CD8-positive, alpha-beta T cell (primary cell): ENCODE measurements at regions of chr17 and their contacts with region 1.

Region 1: GRCh38 chr17:68035523-68036303 is at the start of gene KPNA2:
- DNase-seq: peak; percentile 80 to 96 (median 89)
- ATAC-seq: peak; percentile 84
- H3K4me3 ChIP-seq: peak within 1 kb of the TSS; percentile 97 to 99
- H3K4me3 Mint-ChIP-seq: peak within 1 kb of the TSS; percentile 90
- H3K27ac ChIP-seq: peak within 1 kb of the TSS; percentile 88 to 90
- H3K27ac Mint-ChIP-seq: peak within 1 kb of the TSS; percentile 95
- H3K4me1 ChIP-seq: peaks cover 8% of the 10 kb centered on the region
- H3K4me1 Mint-ChIP-seq: peaks cover 13% of the 10 kb centered on the region
- H3K27me3 ChIP-seq: no peaks in the 10 kb centered on the region
- H3K27me3 Mint-ChIP-seq: no peaks in the 10 kb centered on the region
- CTCF ChIP-seq: no peak
- total RNA-seq, gene KPNA2: 111 to 121 TPM

Region 2: DNA sequence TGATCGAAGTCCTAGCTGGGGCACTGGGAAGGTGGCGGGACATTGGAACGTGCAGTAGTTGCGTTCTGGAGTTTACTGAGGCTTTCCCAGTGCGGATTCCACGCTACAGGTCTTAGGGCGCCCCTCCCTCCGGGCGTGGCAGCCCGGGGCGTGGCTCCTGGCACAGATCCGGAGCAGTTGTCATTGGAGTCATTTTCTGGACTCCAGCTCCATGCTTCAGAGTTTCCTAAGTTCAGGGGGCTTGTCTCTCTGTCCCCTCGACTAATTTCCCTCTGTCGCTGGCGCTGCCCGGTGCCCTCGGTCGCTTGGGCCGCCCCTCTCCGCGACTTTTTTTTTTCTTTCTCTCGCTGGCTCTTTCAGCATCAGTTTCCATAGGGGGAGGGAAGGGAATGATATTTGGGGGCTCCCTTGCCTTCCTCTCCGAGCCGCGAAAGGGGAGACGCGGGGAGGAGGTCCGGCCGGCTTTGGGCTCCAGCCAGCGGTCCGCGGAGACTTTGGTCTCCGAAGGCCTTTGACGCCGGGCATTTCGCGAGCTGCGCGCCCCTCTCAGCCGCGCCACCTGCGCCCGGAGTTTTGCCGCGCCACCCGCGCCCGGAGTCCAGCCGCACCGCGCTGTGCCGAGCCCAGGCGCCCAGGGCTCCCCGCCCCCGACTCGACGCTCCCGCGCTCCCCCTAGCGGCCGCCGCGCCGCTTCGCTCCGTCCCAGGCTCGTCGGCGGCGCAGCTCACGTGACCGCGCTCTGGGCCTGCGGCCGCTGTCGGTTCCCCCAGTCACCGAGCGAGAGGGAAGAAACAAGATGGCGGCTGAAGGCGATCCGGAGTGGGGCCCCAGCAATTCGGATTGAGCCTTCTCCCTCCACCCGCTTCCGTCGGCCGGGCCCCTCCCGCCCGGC is 210.7 kb before region 1 on chr17 and contains the start of gene BPTF:
- CTCF ChIA-PET with region 1: no interaction called
- POLR2A ChIA-PET with region 1: no interaction called
- intact Hi-C with region 1: loop called in 1 of 2 experiments (anchors 1 kb)
- DNase-seq: peak; percentile 82 to 97 (median 92)
- ATAC-seq: peak; percentile 69
- H3K4me3 ChIP-seq: peak within 1 kb of the TSS; percentile 75 to 85
- H3K4me3 Mint-ChIP-seq: peak within 1 kb of the TSS; percentile 99
- H3K27ac ChIP-seq: peak within 1 kb of the TSS; percentile 68 to 80
- H3K27ac Mint-ChIP-seq: peak within 1 kb of the TSS; percentile 100
- H3K4me1 ChIP-seq: peaks cover 33% of the 10 kb centered on the region
- H3K4me1 Mint-ChIP-seq: peaks cover 31% of the 10 kb centered on the region
- H3K27me3 ChIP-seq: no peaks in the 10 kb centered on the region
- H3K27me3 Mint-ChIP-seq: peaks cover 4% of the 10 kb centered on the region
- CTCF ChIP-seq: peak; percentile 94
- total RNA-seq, gene BPTF: 97.8 to 107 TPM

Region 3: DNA sequence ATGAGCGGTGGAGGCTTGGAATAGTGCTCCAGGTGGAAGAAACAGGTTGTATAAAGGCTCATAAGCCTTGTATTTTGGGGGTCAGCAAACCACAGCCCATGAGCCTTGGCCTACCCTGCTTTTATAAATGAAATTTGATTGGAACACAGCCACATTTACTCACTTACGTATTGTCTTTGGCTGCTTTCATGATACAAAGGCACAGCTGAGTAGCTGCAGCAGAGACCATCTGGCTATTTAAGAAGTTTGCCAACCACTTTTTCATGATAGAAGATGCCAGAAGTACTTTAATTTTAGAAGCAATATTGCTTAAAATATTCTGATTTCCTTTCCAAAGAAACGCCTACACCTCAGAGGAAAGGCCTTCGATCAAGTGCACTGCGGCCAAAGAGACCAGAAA is 113.2 kb before region 1 on chr17:
- CTCF ChIA-PET with region 1: no interaction called
- POLR2A ChIA-PET with region 1: no interaction called
- intact Hi-C with region 1: no loop called
- DNase-seq: no peak
- ATAC-seq: no peak
- H3K4me3 ChIP-seq: no peak overlapping the region
- H3K4me3 Mint-ChIP-seq: no peak overlapping the region
- H3K27ac ChIP-seq: no peak overlapping the region
- H3K27ac Mint-ChIP-seq: peak overlapping the region; percentile 79
- H3K4me1 ChIP-seq: no peaks in the 10 kb centered on the region
- H3K4me1 Mint-ChIP-seq: no peaks in the 10 kb centered on the region
- H3K27me3 ChIP-seq: no peaks in the 10 kb centered on the region
- H3K27me3 Mint-ChIP-seq: no peaks in the 10 kb centered on the region
- CTCF ChIP-seq: no peak

Region 4: DNA sequence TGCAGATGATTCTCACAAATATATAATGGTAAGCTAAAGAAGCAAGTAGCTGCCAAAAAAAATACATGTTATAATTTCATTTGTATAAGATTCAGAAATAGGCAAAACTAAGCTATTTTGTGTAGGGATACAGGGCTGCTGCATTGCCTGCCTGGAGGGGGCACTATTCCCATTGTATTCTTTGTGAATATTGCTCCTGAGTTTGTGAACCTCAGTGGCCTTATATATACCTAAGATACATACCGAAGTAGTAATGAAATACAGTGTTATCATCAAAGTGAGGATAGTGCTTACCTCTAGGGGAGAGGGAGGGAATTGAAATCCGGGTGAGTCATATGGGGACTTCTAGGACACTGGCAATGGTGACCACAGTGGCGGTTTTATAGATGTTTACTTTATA is 92.9 kb before region 1 on chr17:
- CTCF ChIA-PET with region 1: no interaction called
- POLR2A ChIA-PET with region 1: no interaction called
- intact Hi-C with region 1: no loop called
- DNase-seq: peak in 1 of 9 experiments; percentile 26
- ATAC-seq: no peak
- H3K4me3 ChIP-seq: no peak overlapping the region
- H3K4me3 Mint-ChIP-seq: no peak overlapping the region
- H3K27ac ChIP-seq: no peak overlapping the region
- H3K27ac Mint-ChIP-seq: no peak overlapping the region
- H3K4me1 ChIP-seq: no peaks in the 10 kb centered on the region
- H3K4me1 Mint-ChIP-seq: no peaks in the 10 kb centered on the region
- H3K27me3 ChIP-seq: no peaks in the 10 kb centered on the region
- H3K27me3 Mint-ChIP-seq: no peaks in the 10 kb centered on the region
- CTCF ChIP-seq: peak; percentile 39

Region 5: DNA sequence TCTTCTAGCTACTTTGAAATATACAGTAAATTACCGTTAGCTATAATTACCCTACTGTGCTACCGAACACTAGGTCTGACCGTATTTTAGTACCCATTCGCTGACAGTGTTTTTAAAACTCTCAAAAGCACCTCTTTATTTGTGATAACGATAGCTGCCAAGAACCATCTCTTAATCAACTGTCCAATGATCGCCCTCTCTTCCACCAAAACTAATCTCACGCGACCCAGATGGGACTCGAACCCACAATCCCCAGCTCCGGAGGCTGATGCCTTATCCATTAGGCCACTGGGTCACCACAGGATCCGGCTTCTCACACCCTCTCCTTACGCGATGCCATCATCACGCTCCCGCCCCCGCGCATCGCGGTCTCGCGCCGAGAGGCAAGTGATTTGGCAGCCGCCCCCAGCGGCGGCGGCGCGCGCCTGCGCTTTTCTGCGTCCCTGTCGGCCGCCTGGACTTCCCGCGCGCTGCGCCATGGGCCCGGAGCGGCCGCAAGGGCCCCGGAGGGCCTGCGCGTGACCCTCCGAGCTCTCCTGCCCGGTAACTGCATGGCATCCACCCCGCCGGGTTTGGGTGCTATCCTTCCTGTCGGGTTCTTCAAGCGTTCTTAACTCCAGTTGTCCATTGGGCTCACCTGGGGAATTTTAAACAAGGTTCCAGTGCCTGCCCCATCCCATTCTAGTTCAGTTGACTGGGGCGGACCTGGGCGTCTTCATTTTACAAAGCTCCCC is 15.9 kb before region 1 on chr17:
- CTCF ChIA-PET with region 1: interaction called, 4 read pairs
- POLR2A ChIA-PET with region 1: interaction called, 5 read pairs
- intact Hi-C with region 1: loop called (anchors 1 kb)
- DNase-seq: peak; percentile 93 to 99 (median 96)
- ATAC-seq: peak; percentile 92
- H3K4me3 ChIP-seq: peak overlapping the region; percentile 64 to 71
- H3K4me3 Mint-ChIP-seq: peak overlapping the region; percentile 84
- H3K27ac ChIP-seq: peak overlapping the region; percentile 58 to 64
- H3K27ac Mint-ChIP-seq: peak overlapping the region; percentile 93
- H3K4me1 ChIP-seq: peaks cover 6% of the 10 kb centered on the region
- H3K4me1 Mint-ChIP-seq: peaks cover 23% of the 10 kb centered on the region
- H3K27me3 ChIP-seq: no peaks in the 10 kb centered on the region
- H3K27me3 Mint-ChIP-seq: no peaks in the 10 kb centered on the region
- CTCF ChIP-seq: peak; percentile 33

Region 6: GRCh38 chr17:68184816-68185436 is 149.2 kb after region 1 on chr17:
- CTCF ChIA-PET with region 1: no interaction called
- POLR2A ChIA-PET with region 1: no interaction called
- intact Hi-C with region 1: loop called in 1 of 2 experiments (anchors 10 kb)
- DNase-seq: peak in 7 of 9 experiments; percentile 46 to 89 (median 64)
- ATAC-seq: peak; percentile 70
- H3K4me3 ChIP-seq: peak overlapping the region; percentile 11 to 74
- H3K4me3 Mint-ChIP-seq: peak overlapping the region; percentile 68
- H3K27ac ChIP-seq: peak overlapping the region; percentile 5 to 92
- H3K27ac Mint-ChIP-seq: peak overlapping the region; percentile 86
- H3K4me1 ChIP-seq: peaks cover 56% of the 10 kb centered on the region
- H3K4me1 Mint-ChIP-seq: peaks cover 63% of the 10 kb centered on the region
- H3K27me3 ChIP-seq: no peaks in the 10 kb centered on the region
- H3K27me3 Mint-ChIP-seq: no peaks in the 10 kb centered on the region
- CTCF ChIP-seq: no peak

Region 7: DNA sequence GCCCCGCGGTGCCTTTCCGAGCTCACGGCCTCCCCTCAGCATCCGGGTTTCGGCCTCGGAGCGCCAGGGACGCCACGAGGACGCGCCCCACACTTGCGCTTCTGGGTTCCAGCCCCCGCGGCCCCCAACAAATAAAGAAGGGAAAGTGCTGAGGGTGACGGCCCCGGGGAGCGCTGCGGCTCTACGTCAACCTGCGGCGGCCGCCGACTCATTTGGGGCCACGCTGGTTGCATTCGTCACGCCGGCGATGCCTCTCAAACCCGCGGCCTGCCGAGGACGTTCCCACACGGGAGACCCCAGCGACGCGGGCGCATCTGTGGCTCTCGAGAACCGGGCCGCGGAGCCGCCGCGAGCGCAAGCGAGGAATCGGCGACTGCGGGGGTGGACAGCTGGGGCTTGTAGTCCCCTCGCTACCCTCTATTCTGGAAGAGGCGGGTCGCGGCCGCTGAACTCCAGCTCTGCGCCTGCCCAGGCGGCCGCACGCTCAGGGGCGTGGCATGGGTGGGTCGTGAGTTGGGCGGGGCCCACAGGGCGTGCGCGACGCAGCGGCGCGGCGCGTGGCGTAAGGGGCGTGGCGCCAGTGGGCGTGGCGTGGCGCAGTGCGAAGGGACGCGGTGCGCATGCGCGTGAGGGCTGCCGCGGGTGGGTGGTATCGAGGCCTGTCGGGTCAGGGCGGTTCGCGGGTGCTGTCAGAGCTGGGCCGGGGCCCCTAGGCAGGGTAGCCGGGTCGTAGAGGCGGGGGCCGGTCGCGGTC is 211.9 kb after region 1 on chr17 and contains the start of gene AMZ2:
- CTCF ChIA-PET with region 1: no interaction called
- POLR2A ChIA-PET with region 1: no interaction called
- intact Hi-C with region 1: loop called in 1 of 2 experiments (anchors 1 kb)
- DNase-seq: peak; percentile 94 to 99 (median 98)
- ATAC-seq: peak; percentile 91
- H3K4me3 ChIP-seq: peak within 1 kb of the TSS; percentile 70 to 94
- H3K4me3 Mint-ChIP-seq: peak within 1 kb of the TSS; percentile 96
- H3K27ac ChIP-seq: peak within 1 kb of the TSS; percentile 93 to 96
- H3K27ac Mint-ChIP-seq: peak within 1 kb of the TSS; percentile 98
- H3K4me1 ChIP-seq: peaks cover 34% of the 10 kb centered on the region
- H3K4me1 Mint-ChIP-seq: peaks cover 42% of the 10 kb centered on the region
- H3K27me3 ChIP-seq: no peaks in the 10 kb centered on the region
- H3K27me3 Mint-ChIP-seq: no peaks in the 10 kb centered on the region
- CTCF ChIP-seq: no peak
- total RNA-seq, gene AMZ2: 61.0 to 71.1 TPM

Region 8: DNA sequence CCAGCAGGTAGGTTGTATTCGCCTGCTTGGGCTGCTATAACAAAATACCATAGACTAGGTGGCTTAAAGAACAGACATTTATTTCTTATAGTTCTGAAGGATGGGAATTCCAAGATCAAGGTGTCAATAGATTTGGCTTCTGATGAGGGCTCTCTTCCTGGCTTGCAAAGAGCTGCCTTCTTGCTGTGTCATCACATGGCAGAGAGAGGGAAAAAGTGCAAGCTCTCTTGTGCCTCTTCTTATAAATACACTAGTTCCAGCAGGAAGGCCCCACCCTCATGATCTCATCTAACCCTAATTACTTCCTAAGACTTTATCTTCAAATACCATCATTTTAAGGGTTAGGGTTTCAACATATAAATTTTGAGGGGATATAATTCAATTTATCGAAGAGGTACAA is 994.4 kb after region 1 on chr17:
- CTCF ChIA-PET with region 1: no interaction called
- POLR2A ChIA-PET with region 1: no interaction called
- intact Hi-C with region 1: no loop called
- DNase-seq: no peak
- ATAC-seq: no peak
- H3K4me3 ChIP-seq: no peak overlapping the region
- H3K4me3 Mint-ChIP-seq: no peak overlapping the region
- H3K27ac ChIP-seq: no peak overlapping the region
- H3K27ac Mint-ChIP-seq: no peak overlapping the region
- H3K4me1 ChIP-seq: no peaks in the 10 kb centered on the region
- H3K4me1 Mint-ChIP-seq: no peaks in the 10 kb centered on the region
- H3K27me3 ChIP-seq: no peaks in the 10 kb centered on the region
- H3K27me3 Mint-ChIP-seq: peaks cover 5% of the 10 kb centered on the region
- CTCF ChIP-seq: no peak

Region 9: DNA sequence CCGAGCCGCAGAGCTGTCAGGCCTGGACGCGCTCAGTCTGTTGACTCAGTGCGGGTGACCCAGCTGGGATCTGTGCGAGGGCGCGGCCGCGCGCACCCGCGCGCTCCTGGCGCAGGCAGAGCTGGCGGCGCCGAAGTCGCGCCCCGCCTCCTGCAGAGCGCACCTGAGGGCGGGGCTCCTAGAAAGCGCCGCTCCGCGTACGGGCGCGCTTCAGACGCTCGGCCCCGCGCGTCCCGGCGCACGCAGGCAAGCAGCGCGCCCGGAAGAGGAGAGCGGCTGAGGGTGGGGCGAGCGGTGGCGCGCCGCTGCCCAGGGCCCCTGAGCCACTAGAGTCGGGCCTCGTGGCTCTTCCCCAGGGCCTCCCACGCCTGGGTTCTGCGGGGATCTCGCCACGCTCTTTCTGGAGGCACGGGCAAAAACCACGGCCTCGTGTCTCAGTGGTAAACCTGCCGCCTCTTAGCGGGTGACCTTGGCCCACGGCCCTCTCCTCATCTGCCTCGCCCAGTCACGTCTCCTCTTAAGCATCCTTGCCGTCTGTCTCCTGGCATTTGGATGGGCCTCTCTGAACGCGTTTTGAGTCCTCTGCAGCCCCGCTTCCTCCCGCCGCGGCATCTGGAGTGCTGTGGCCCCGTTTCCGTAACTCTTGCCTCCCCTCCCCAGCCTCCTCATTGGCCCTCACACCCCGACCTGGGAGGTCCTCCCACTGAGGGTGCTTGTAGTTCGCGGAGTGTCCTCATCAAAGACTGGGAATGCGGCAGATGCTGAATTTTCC is 1291.5 kb after region 1 on chr17 and contains the start of gene ABCA5:
- CTCF ChIA-PET with region 1: no interaction called
- POLR2A ChIA-PET with region 1: no interaction called
- intact Hi-C with region 1: loop called in 1 of 2 experiments (anchors 5 kb)
- DNase-seq: peak; percentile 72 to 98 (median 87)
- ATAC-seq: peak; percentile 96
- H3K4me3 ChIP-seq: peak within 1 kb of the TSS; percentile 79 to 94
- H3K4me3 Mint-ChIP-seq: peak within 1 kb of the TSS; percentile 96
- H3K27ac ChIP-seq: peak within 1 kb of the TSS; percentile 85 to 92
- H3K27ac Mint-ChIP-seq: peak within 1 kb of the TSS; percentile 97
- H3K4me1 ChIP-seq: peaks cover 17% of the 10 kb centered on the region
- H3K4me1 Mint-ChIP-seq: peaks cover 30% of the 10 kb centered on the region
- H3K27me3 ChIP-seq: peaks cover 0 to 3% of the 10 kb centered on the region in 2 experiments
- H3K27me3 Mint-ChIP-seq: peaks cover 7% of the 10 kb centered on the region
- CTCF ChIP-seq: no peak
- total RNA-seq, gene ABCA5: 21.8 to 22.4 TPM